ENCODE measurements at regions of chr7 and their contacts with region 1.

Region 1: GRCh38 chr7:35714862-35715261 is 19.9 kb upstream of the HERPUD2 start:
- DNase-seq: no peak
- ATAC-seq: no peak

Region 2: DNA sequence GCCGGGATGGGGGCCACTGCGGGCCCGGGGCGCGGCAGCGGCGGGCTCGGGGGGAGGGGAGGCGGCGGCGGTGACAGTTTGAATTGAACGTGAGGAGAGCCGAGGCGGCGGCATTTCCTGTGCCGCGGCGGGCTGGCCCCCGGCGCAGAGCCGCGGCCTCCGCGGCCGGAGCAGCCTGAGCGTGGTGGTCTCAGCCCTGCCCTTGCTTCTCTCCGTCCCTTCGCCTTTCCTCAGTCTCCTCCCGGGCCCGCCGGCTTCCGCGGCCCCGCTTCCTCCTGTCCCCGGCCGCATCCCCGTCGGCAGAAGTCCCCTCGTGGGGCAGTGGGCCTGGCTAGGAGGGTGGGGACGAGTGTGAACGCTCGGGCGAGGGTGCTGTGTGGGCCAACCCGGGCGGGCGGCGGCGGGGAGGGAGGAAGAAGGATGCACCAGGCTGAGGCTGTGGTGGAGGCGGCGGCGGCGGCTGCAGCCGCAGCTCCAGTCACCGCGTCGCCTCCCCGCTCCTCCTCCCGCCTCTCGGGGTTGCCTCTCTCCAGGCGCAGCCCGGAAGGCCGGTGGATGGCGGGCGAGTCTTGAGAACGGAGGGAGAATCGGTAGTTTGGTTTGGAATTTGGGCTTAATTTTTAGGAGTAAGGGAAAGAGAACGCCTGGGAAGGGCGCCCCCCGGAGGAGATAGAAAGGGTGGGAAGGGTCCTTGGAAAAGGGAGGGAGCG is 86.7 kb after region 1 on chr7:
- intact Hi-C with region 1: loop called in 1 of 2 experiments (anchors 5 kb)
- DNase-seq: peak; percentile 74 to 79
- ATAC-seq: peak; percentile 55